ENCODE measurements at regions of chr3 and their contacts with region 1.

Region 1: GRCh38 chr3:152071924-152072323 is 196.8 kb upstream of the MBNL1 start:
- DNase-seq: peak; percentile 71
- H3K4me3 Mint-ChIP-seq: no peak overlapping the region
- H3K27ac Mint-ChIP-seq: no peak overlapping the region
- H3K4me1 Mint-ChIP-seq: peaks cover 3% of the 10 kb centered on the region
- H3K27me3 Mint-ChIP-seq: peaks cover 7% of the 10 kb centered on the region

Region 2: GRCh38 chr3:152281133-152281713 is 209.3 kb after region 1 on chr3:
- intact Hi-C with region 1: loop called (anchors 5 kb)
- DNase-seq: peak; percentile 63
- H3K4me3 Mint-ChIP-seq: peak overlapping the region; percentile 34
- H3K27ac Mint-ChIP-seq: peak overlapping the region; percentile 81
- H3K4me1 Mint-ChIP-seq: peaks cover 70% of the 10 kb centered on the region
- H3K27me3 Mint-ChIP-seq: no peaks in the 10 kb centered on the region

Region 3: DNA sequence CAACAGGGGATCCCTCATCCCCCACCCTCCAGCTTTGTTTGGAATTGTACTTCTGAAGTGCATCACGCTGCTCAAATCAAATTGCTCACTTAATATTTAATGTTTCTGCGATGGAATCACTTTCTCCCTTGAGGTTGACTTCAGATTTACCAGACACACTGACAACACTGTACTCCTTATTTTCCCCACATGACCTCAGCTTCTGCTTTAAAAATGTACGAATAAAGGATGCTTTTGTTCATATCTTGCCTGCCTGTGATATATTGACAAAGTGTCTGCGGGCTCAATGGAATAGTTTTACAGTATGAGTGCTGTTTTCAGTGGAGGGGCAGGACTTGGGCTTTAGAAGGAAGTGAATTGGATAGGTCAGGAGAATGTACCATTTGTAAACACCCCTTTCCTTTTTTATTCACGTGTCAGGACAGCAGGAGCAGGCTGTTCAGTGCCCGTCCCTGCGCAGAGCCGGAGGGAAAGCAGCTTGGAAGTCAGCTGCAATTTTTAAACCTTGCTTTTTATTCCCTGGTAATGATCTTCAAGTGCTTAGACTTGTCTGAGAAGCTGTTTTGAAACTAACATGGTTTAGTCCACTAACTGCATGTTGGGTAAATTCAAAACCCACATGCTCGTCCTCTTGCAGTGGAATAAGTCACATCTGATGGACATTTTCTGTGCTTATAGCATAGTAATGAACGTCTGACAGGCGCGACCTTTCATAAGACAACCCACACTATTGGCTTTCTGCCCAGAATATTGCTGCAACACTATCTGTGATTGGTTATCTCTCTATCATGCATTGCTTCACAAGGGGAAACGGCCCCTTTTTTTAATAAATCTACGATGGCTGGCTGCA is 226.7 kb after region 1 on chr3:
- intact Hi-C with region 1: loop called (anchors 10 kb)
- DNase-seq: peak; percentile 83
- H3K4me3 Mint-ChIP-seq: peak overlapping the region; percentile 88
- H3K27ac Mint-ChIP-seq: peak overlapping the region; percentile 98
- H3K4me1 Mint-ChIP-seq: peaks cover 59% of the 10 kb centered on the region
- H3K27me3 Mint-ChIP-seq: no peaks in the 10 kb centered on the region

Region 4: DNA sequence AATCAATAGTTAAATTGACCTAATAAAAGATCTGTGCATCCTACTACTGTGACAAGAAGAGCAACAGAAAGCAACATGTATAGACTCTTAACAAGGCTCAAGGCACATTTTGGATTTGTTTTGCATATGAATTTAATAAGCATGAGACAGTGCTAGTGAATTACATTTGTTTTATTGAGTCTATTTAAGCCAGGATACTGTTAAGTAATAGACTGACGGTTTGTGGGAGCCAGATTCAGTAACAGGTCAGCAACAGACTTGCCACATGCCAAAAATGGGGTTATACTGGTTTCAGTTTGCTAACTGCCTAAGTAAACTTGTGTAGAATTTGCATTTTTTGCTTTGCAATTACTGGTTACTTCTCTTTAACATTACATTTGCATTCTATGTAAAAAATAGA is 250.8 kb after region 1 on chr3:
- intact Hi-C with region 1: no loop called
- DNase-seq: no peak
- H3K4me3 Mint-ChIP-seq: peak overlapping the region; percentile 43
- H3K27ac Mint-ChIP-seq: peak overlapping the region; percentile 71
- H3K4me1 Mint-ChIP-seq: peaks cover 63% of the 10 kb centered on the region
- H3K27me3 Mint-ChIP-seq: no peaks in the 10 kb centered on the region

Region 5: GRCh38 chr3:152444029-152444641 is 372.2 kb after region 1 on chr3:
- intact Hi-C with region 1: loop called (anchors 5 kb)
- DNase-seq: no peak
- H3K4me3 Mint-ChIP-seq: no peak overlapping the region
- H3K27ac Mint-ChIP-seq: peak overlapping the region; percentile 5
- H3K4me1 Mint-ChIP-seq: peaks cover 41% of the 10 kb centered on the region
- H3K27me3 Mint-ChIP-seq: no peaks in the 10 kb centered on the region

Region 6: GRCh38 chr3:152524198-152525140 is 452.5 kb after region 1 on chr3:
- intact Hi-C with region 1: loop called (anchors 5 kb)
- DNase-seq: peak; percentile 85
- H3K4me3 Mint-ChIP-seq: no peak overlapping the region
- H3K27ac Mint-ChIP-seq: no peak overlapping the region
- H3K4me1 Mint-ChIP-seq: no peaks in the 10 kb centered on the region
- H3K27me3 Mint-ChIP-seq: peaks cover 1% of the 10 kb centered on the region

Measured in activated CD4-positive, alpha-beta T cell treated with anti-CD3 and anti-CD28 coated beads, Interleukin-2, amount 10 ng/mL, durations not matched to agents 24 days and 14 days (primary cell).